Posterior vena cava (tissue), 2 donors: ENCODE measurements at regions of chr19 and their contacts with region 1.

Region 1: GRCh38 chr19:47005873-47006272 is 13.8 kb upstream of the NPAS1 start:
- DNase-seq: no peak

Region 2: GRCh38 chr19:46668662-46669061 is 337.2 kb before region 1 on chr19:
- intact Hi-C with region 1: loop called in 1 of 2 experiments (anchors 5 kb)
- DNase-seq: no peak